Gastrocnemius medialis (tissue), 4 donors: ENCODE measurements at regions of chr10 and their contacts with region 1.

Region 1: GRCh38 chr10:61140765-61141392 is 196.9 kb upstream of the RHOBTB1 start:
- DNase-seq: no peak
- ATAC-seq: peak; percentile 69 to 81
- H3K4me3 ChIP-seq: no peak overlapping the region
- H3K27ac ChIP-seq: no peak overlapping the region
- H3K4me1 ChIP-seq: peaks cover 0 to 12% of the 10 kb centered on the region in 2 donors
- H3K27me3 ChIP-seq: no peaks in the 10 kb centered on the region
- CTCF ChIP-seq: peak; percentile 69 to 79 (median 73)
- POLR2A ChIP-seq: no peak

Region 2: GRCh38 chr10:60894786-60895185 is 246.1 kb before region 1 on chr10:
- in situ Hi-C with region 1: no loop called
- intact Hi-C with region 1: no loop called
- DNase-seq: no peak
- ATAC-seq: no peak
- H3K4me3 ChIP-seq: no peak overlapping the region
- H3K27ac ChIP-seq: peak overlapping the region; percentile 81 to 96 (median 86)
- H3K4me1 ChIP-seq: peaks cover 57 to 61% of the 10 kb centered on the region in 2 donors
- H3K27me3 ChIP-seq: no peaks in the 10 kb centered on the region
- CTCF ChIP-seq: no peak
- POLR2A ChIP-seq: no peak

Region 3: GRCh38 chr10:61189912-61190311 is 49.0 kb after region 1 on chr10:
- in situ Hi-C with region 1: no loop called
- intact Hi-C with region 1: loop called (anchors 1 kb)
- DNase-seq: no peak
- ATAC-seq: no peak
- H3K4me3 ChIP-seq: no peak overlapping the region
- H3K27ac ChIP-seq: no peak overlapping the region
- H3K4me1 ChIP-seq: peaks cover 0 to 5% of the 10 kb centered on the region in 2 donors
- H3K27me3 ChIP-seq: no peaks in the 10 kb centered on the region
- CTCF ChIP-seq: no peak
- POLR2A ChIP-seq: no peak

Region 4: GRCh38 chr10:61733358-61733940 is 592.6 kb after region 1 on chr10:
- in situ Hi-C with region 1: loop called in 2 of 4 experiments (anchors 25 kb)
- intact Hi-C with region 1: no loop called
- DNase-seq: no peak
- ATAC-seq: no peak
- H3K4me3 ChIP-seq: no peak overlapping the region
- H3K27ac ChIP-seq: no peak overlapping the region
- H3K4me1 ChIP-seq: no peaks in the 10 kb centered on the region
- H3K27me3 ChIP-seq: no peaks in the 10 kb centered on the region
- CTCF ChIP-seq: peak in 2 of 5 experiments; percentile 38 to 49
- POLR2A ChIP-seq: no peak